ENCODE measurements at regions of chr11 and their contacts with region 1.

Region 1: GRCh38 chr11:35040221-35040942 is 98.6 kb upstream of the CD44 start:
- DNase-seq: peak; percentile 83
- H3K4me3 Mint-ChIP-seq: peak overlapping the region; percentile 76
- H3K27ac Mint-ChIP-seq: peak overlapping the region; percentile 94
- H3K4me1 Mint-ChIP-seq: peaks cover 60% of the 10 kb centered on the region
- H3K27me3 Mint-ChIP-seq: peaks cover 5% of the 10 kb centered on the region

Region 2: GRCh38 chr11:34916015-34916842 is 124.2 kb before region 1 on chr11 and contains the starts of genes APIP and PDHX:
- CTCF ChIA-PET with region 1: no interaction called
- intact Hi-C with region 1: loop called (anchors 2 kb)
- DNase-seq: peak; percentile 98
- H3K4me3 Mint-ChIP-seq: peak within 1 kb of the TSS; percentile 99
- H3K27ac Mint-ChIP-seq: peak within 1 kb of the TSS; percentile 96
- H3K4me1 Mint-ChIP-seq: peaks cover 44% of the 10 kb centered on the region
- H3K27me3 Mint-ChIP-seq: no peaks in the 10 kb centered on the region
- total RNA-seq, gene APIP: 42.4 to 42.5 TPM
- total RNA-seq, gene PDHX: 38.2 to 40.9 TPM

Region 3: GRCh38 chr11:35073691-35074419 is 33.5 kb after region 1 on chr11:
- CTCF ChIA-PET with region 1: interaction called, 3 read pairs
- intact Hi-C with region 1: loop called (anchors 1 kb)
- DNase-seq: peak; percentile 68
- H3K4me3 Mint-ChIP-seq: peak overlapping the region; percentile 31
- H3K27ac Mint-ChIP-seq: peak overlapping the region; percentile 83
- H3K4me1 Mint-ChIP-seq: peaks cover 67% of the 10 kb centered on the region
- H3K27me3 Mint-ChIP-seq: no peaks in the 10 kb centered on the region

Region 4: GRCh38 chr11:35126000-35126878 is 85.9 kb after region 1 on chr11:
- CTCF ChIA-PET with region 1: no interaction called
- intact Hi-C with region 1: loop called (anchors 1 kb)
- DNase-seq: peak; percentile 81
- H3K4me3 Mint-ChIP-seq: peak overlapping the region; percentile 54
- H3K27ac Mint-ChIP-seq: peak overlapping the region; percentile 91
- H3K4me1 Mint-ChIP-seq: peaks cover 65% of the 10 kb centered on the region
- H3K27me3 Mint-ChIP-seq: no peaks in the 10 kb centered on the region

Region 5: GRCh38 chr11:35177370-35177769 is 137.0 kb after region 1 on chr11:
- CTCF ChIA-PET with region 1: no interaction called
- intact Hi-C with region 1: loop called (anchors 1 kb)
- DNase-seq: peak; percentile 56
- H3K4me3 Mint-ChIP-seq: no peak overlapping the region
- H3K27ac Mint-ChIP-seq: peak overlapping the region; percentile 77
- H3K4me1 Mint-ChIP-seq: peaks cover 90% of the 10 kb centered on the region
- H3K27me3 Mint-ChIP-seq: no peaks in the 10 kb centered on the region

Region 6: DNA sequence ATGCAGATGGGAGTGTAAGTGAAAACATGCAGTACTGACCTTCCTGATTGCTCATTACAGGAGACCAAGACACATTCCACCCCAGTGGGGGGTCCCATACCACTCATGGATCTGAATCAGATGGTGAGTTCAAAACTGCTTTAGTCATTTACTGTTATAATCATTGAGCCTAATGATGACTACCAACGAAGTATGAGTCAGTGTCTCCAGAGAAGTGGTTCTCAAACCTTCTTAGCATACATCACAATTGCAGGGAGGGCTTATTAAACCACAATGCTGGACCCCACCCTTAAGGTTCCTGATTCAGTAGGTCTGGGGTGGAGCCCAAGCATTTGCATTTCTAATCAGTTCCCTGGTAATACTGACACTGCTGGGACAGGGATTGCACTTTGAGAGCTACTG is 174.4 kb after region 1 on chr11:
- CTCF ChIA-PET with region 1: no interaction called
- intact Hi-C with region 1: loop called (anchors 1 kb)
- DNase-seq: peak; percentile 77
- H3K4me3 Mint-ChIP-seq: no peak overlapping the region
- H3K27ac Mint-ChIP-seq: peak overlapping the region; percentile 78
- H3K4me1 Mint-ChIP-seq: peaks cover 62% of the 10 kb centered on the region
- H3K27me3 Mint-ChIP-seq: no peaks in the 10 kb centered on the region

Measured in activated naive CD4-positive, alpha-beta T cell treated with anti-CD3 and anti-CD28 coated beads for 36 hours (primary cell).